ENCODE measurements at regions of chr6 and their contacts with region 1.

Region 1: DNA sequence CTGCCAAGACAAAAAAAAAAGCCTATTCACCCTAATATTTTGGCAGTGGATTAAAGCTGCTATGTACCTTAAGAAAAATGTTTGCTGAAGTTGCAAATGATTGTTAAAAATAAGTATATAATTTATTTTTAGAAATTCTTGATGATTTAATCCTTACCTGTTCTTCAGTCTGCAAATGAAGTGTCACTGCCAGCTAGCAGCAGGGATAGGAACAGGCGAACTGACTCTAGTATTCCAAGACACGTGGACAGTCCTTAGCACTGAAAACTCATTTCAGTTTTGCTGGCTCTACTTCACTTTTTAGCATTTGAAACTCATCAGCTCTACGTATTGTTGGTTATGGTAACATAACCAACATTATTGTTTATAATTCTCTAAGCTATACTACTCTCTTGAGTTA is 204.4 kb upstream of the ID4 start:
- DNase-seq: no peak
- ATAC-seq: no peak
- H3K4me3 ChIP-seq: no peak overlapping the region
- H3K27ac ChIP-seq: no peak overlapping the region
- H3K4me1 ChIP-seq: no peaks in the 10 kb centered on the region
- H3K27me3 ChIP-seq: no peaks in the 10 kb centered on the region
- CTCF ChIP-seq: no peak

Region 2: DNA sequence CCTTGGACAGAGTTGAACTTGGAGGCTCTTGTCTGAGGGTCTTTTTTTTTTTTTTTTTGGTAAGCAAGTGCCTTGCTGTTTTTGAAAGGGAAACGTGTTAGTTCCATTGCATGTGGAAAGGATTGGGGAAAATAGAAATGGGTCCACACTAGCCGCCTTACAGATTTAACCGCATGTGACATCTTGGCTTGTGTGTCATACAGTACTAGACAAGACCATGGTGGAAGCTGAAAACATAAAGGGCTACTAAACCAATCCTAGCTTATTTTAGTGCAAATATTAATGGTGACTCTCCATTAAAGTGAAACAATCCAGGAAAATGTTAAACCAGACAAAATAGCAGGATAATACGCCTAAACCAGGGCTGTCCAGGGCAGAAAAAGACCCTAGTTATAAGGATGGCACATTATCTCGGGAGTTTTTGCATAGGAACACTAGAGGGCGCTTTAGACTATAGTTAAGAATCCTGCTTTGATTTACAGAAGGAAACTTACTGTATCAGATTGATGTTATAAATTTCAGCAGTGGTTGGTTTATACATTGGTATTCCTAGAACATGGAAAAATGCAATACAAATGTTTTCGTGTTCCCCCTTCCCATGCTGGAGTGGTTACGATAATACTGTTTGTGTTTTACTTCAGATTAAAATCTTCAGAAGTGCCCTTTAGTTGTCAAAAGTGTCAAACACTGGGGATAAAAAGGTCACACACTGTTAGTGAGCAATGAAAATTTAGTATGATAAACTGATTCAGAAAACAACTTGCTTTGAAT is 1308.7 kb before region 1 on chr6:
- intact Hi-C with region 1: loop called in 1 of 2 experiments (anchors 5 kb)
- DNase-seq: no peak
- ATAC-seq: peak; percentile 67 to 90 (median 74)
- H3K4me3 ChIP-seq: no peak overlapping the region
- H3K27ac ChIP-seq: no peak overlapping the region
- H3K4me1 ChIP-seq: peaks cover 26% of the 10 kb centered on the region
- H3K27me3 ChIP-seq: no peaks in the 10 kb centered on the region
- CTCF ChIP-seq: peak; percentile 80

Region 3: GRCh38 chr6:19368509-19368908 is 264.3 kb before region 1 on chr6:
- intact Hi-C with region 1: no loop called
- DNase-seq: no peak
- ATAC-seq: no peak
- H3K4me3 ChIP-seq: no peak overlapping the region
- H3K27ac ChIP-seq: no peak overlapping the region
- H3K4me1 ChIP-seq: no peaks in the 10 kb centered on the region
- H3K27me3 ChIP-seq: no peaks in the 10 kb centered on the region
- CTCF ChIP-seq: no peak

Region 4: DNA sequence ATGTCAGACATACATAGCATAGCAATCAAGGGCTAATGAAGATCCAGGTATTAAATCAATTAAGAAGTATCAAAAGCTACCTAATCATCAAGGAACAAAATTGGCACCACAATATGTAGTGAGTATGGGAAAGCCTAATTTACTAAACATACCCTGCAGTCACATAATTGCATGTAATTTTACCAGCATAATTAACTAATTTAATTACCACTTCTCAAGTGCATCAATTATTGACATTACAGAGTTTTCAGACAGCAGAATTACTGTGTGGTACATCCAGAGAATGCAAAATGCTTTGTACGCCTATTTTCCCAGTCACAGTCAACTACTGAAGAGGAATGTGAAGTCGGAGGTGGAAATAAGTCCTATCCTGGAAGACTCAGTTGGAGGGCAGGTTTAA is 74.6 kb before region 1 on chr6:
- intact Hi-C with region 1: no loop called
- DNase-seq: no peak
- ATAC-seq: no peak
- H3K4me3 ChIP-seq: no peak overlapping the region
- H3K27ac ChIP-seq: no peak overlapping the region
- H3K4me1 ChIP-seq: no peaks in the 10 kb centered on the region
- H3K27me3 ChIP-seq: no peaks in the 10 kb centered on the region
- CTCF ChIP-seq: no peak

Measured in psoas muscle (tissue), 8 donors.